Right ventricle myocardium superior (tissue), 1 donor: ENCODE measurements at regions of chr12 and their contacts with region 1.

Region 1: GRCh38 chr12:122399592-122400373 is 22.7 kb downstream of the CLIP1 start:
- DNase-seq: peak; percentile 61
- ATAC-seq: peak; percentile 90

Region 2: GRCh38 chr12:122090759-122091515 is 308.8 kb before region 1 on chr12:
- intact Hi-C with region 1: no loop called
- DNase-seq: peak; percentile 46
- ATAC-seq: peak; percentile 43

Region 3: DNA sequence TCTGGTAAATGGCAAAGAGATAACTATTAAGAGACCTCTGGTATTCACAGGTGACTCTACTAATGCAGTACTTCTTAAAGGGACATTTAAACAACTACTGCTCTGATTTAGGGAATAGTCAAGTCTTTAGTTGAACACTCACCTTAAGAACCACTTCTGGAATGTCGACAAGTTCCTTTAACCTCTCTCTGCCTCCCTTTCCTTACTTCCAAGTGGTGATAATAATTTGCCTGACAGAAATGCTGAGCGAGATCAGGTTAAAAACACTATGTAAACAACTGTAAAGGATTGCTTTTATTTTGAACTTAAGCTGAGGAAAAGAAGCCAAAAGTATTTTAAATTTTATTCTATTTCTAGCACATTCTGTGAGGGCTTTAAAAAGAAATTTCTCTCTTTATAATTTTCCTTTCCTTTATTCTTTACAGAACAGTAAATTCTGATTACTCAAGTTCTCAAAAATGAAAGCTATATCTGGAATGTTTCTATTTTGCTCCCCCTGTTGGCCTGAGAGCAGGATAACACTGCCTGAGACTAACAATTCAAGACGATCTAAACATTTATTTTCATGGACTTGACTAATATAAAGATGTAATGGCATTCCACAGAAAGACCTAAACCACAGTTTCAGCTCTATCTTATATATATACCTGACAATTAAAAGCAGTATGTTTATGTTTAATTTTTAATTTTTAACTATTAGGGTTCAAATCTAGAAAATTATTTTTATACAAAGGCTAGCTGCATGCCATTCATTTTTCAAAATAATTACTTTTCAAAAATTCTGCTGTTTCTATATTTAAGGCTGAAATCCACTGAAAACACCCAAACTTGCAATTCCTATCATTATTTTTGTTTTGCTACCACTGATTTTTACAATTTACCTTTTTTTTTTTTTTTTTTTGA is 71.8 kb after region 1 on chr12:
- intact Hi-C with region 1: loop called (anchors 5 kb)
- DNase-seq: no peak
- ATAC-seq: peak; percentile 72

Region 4: DNA sequence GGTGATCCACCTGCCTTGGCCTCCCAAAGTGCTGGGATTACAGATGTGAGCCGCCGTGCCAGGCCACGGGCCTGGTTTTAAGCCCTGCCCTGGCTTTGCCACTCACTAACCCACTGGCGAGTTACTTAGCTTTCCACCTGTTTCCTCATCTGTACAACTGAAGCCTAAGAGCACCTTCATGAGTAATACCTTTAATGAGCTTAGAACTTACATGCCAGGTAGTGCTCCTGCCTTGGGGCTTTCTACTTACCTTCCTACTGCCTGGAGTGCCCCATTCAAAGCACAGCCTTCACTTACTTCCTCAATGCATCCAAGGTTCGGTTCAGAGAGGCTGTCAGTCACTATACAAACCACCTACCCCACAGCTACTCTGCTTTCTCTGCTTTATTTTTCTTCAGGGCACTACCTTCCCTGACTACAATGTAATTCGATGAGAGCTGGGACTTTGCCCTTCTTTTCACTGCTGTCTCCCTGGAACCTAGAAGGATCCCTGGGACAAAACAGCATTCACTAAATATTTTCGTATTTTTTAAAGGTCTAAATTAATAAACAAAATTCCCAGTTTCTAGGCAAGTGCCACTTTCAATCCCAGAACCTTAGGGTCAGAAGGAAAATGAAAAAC is 87.1 kb after region 1 on chr12:
- intact Hi-C with region 1: no loop called
- DNase-seq: no peak
- ATAC-seq: no peak

Region 5: GRCh38 chr12:122659519-122659918 is 259.7 kb after region 1 on chr12:
- intact Hi-C with region 1: no loop called
- DNase-seq: peak; percentile 56
- ATAC-seq: peak; percentile 80